ENCODE measurements at regions of chr20 and their contacts with region 1.

Region 1: DNA sequence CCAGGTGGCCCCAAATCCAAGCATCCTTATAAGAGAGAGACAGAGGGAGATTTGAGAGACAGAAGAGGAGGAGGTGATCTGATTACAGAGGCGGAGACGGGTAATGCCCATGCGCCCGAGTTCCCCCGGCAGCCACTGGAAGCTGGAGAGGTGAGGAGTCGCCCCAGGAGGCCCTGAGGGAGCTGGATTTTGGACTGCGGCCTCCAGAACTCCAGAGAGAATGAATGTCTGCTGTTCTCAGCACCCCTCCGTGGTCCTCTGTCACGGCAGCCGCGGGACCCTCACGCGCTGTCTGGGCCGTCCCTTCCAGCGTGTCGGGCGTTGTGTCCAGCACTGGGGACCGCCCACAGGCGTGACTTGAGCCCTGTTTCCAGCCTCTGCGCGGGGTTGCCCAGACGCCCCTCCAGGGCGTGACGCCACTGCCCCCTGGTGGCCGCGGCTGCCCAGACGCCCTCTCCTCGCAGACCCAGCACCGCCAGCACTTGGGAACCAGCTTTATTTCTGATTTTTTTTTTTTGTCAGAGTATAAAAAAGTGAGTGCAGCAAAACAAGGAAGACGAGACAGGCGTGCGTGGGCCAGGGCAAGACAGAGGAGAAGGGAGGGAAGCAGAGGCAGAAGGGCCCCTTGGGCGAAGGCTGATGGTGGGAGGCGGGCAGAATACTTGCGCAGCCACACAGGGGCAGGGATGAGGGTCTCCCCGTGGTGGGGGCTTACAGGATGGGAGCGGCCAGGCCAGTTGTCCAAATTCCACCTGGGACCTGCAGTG is 4.1 kb upstream of the ZNF512B start:
- DNase-seq: peak; percentile 57 to 87 (median 77)
- ATAC-seq: peak; percentile 51
- H3K4me3 ChIP-seq: no peak overlapping the region
- H3K4me3 Mint-ChIP-seq: no peak overlapping the region
- H3K27ac ChIP-seq: no peak overlapping the region
- H3K27ac Mint-ChIP-seq: peak overlapping the region; percentile 53
- H3K4me1 ChIP-seq: peaks cover 35% of the 10 kb centered on the region
- H3K4me1 Mint-ChIP-seq: peaks cover 42% of the 10 kb centered on the region
- H3K27me3 ChIP-seq: no peaks in the 10 kb centered on the region
- H3K27me3 Mint-ChIP-seq: no peaks in the 10 kb centered on the region
- CTCF ChIP-seq: peak; percentile 99

Region 2: GRCh38 chr20:63434599-63435378 is 539.0 kb before region 1 on chr20:
- CTCF ChIA-PET with region 1: no interaction called
- POLR2A ChIA-PET with region 1: no interaction called
- intact Hi-C with region 1: loop called in 1 of 2 experiments (anchors 2 kb)
- DNase-seq: peak; percentile 55 to 88 (median 76)
- ATAC-seq: peak; percentile 85
- H3K4me3 ChIP-seq: peak overlapping the region in 1 of 2 experiments; percentile 6
- H3K4me3 Mint-ChIP-seq: peak overlapping the region; percentile 44
- H3K27ac ChIP-seq: peak overlapping the region; percentile 11 to 21
- H3K27ac Mint-ChIP-seq: peak overlapping the region; percentile 79
- H3K4me1 ChIP-seq: peaks cover 8% of the 10 kb centered on the region
- H3K4me1 Mint-ChIP-seq: peaks cover 12% of the 10 kb centered on the region
- H3K27me3 ChIP-seq: no peaks in the 10 kb centered on the region
- H3K27me3 Mint-ChIP-seq: peaks cover 2% of the 10 kb centered on the region
- CTCF ChIP-seq: peak; percentile 92

Region 3: DNA sequence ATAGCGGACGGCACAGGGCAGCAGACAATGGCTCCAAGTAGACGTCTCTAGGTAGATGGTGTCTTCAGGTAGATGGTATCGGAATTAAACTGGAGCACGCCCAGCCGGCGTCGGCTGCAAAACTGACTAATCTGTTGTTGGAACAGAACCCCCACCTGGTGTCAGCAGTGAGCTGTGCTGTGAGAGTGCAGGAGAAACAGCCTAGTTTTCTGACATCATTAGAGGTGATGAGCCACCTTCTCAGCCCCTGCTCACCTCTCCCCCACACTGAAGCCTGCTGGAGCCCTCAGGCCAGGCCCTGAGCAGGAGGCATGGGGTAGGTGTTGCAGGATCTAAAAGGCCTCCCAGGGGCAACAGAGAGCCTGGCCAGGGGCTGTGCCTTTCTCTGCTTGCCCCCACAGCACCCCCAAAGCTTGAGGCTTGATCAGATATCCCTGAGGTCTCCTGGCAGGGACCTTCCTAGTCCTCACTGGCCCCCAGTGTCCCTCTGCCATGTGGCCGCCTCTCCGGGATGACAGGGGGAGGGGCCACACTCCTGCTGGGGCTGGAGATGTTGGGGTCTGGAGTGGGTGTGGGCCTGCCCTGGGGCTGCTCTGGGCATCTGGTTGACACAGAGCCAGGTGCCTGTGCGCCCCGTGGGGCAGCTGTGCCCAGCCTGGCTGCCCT is 392.9 kb before region 1 on chr20:
- CTCF ChIA-PET with region 1: no interaction called
- POLR2A ChIA-PET with region 1: no interaction called
- intact Hi-C with region 1: loop called in 1 of 2 experiments (anchors 2 kb)
- DNase-seq: peak; percentile 58 to 84 (median 77)
- ATAC-seq: peak; percentile 99
- H3K4me3 ChIP-seq: no peak overlapping the region
- H3K4me3 Mint-ChIP-seq: no peak overlapping the region
- H3K27ac ChIP-seq: no peak overlapping the region
- H3K27ac Mint-ChIP-seq: no peak overlapping the region
- H3K4me1 ChIP-seq: peaks cover 5% of the 10 kb centered on the region
- H3K4me1 Mint-ChIP-seq: peaks cover 3% of the 10 kb centered on the region
- H3K27me3 ChIP-seq: no peaks in the 10 kb centered on the region
- H3K27me3 Mint-ChIP-seq: no peaks in the 10 kb centered on the region
- CTCF ChIP-seq: peak; percentile 64

Region 4: DNA sequence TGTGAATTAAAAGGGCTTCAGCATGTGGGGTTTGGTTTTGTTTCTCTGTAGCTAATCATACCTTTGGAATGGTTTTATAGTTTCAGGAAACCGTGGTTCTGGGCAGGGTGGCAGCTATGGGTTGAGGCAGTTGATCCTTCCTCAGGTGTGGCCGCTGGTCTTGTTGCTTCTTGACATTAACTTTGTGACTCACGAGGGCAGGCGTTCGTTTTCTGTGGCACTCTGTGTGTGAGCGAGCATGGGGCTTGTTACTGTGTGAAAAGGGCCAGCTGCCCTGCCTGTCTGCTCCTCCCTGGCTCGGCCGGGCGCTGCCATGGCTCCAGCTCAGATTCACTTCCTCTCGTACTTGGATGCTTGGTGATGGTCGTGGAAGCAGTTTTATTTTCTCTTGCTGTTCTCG is 62.6 kb before region 1 on chr20:
- CTCF ChIA-PET with region 1: interaction called, 17 read pairs
- POLR2A ChIA-PET with region 1: interaction called, 3 read pairs
- intact Hi-C with region 1: loop called (anchors 1 kb)
- DNase-seq: no peak
- ATAC-seq: no peak
- H3K4me3 ChIP-seq: no peak overlapping the region
- H3K4me3 Mint-ChIP-seq: no peak overlapping the region
- H3K27ac ChIP-seq: no peak overlapping the region
- H3K27ac Mint-ChIP-seq: peak overlapping the region; percentile 46
- H3K4me1 ChIP-seq: peaks cover 13% of the 10 kb centered on the region
- H3K4me1 Mint-ChIP-seq: peaks cover 45% of the 10 kb centered on the region
- H3K27me3 ChIP-seq: no peaks in the 10 kb centered on the region
- H3K27me3 Mint-ChIP-seq: no peaks in the 10 kb centered on the region
- CTCF ChIP-seq: no peak

Region 5: DNA sequence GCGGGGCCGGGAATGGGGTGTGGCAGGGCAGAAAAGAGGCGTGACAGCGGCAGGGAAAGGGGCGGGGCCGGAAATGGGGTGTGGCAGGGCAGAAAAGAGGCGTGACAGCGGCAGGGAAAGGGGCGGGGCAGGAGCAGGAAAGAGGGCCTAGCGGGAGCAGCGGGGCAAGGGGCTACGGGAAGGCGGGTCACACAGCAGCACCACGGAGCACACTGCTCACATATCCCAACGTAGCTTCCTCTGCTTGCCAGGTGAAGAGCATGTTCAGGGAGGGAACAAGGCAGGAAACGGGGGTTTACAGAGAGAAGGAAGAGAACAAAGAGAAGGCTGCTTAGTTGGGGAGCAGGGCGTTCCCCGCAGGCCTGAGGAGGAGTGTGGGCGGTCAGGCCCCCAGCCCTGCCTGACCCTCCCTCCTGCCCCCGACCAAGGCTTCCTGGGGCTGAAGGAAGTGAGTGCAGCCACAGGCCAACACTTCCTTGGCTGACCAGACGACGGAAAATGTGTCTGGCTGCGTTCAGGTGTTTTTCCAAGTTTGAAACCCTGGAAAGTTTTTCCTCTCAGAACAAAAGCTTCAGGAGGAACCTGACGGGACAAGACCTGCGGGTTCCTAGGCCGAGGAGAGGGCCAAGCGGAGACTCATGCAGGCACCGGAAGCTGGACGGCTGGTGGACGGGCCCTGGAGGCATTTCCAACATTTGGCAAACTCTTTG is 31.4 kb before region 1 on chr20:
- CTCF ChIA-PET with region 1: no interaction called
- POLR2A ChIA-PET with region 1: no interaction called
- intact Hi-C with region 1: no loop called
- DNase-seq: peak in 3 of 9 experiments; percentile 45 to 59 (median 56)
- ATAC-seq: no peak
- H3K4me3 ChIP-seq: no peak overlapping the region
- H3K4me3 Mint-ChIP-seq: peak overlapping the region; percentile 57
- H3K27ac ChIP-seq: peak overlapping the region; percentile 27 to 58
- H3K27ac Mint-ChIP-seq: peak overlapping the region; percentile 45
- H3K4me1 ChIP-seq: peaks cover 23% of the 10 kb centered on the region
- H3K4me1 Mint-ChIP-seq: peaks cover 23% of the 10 kb centered on the region
- H3K27me3 ChIP-seq: no peaks in the 10 kb centered on the region
- H3K27me3 Mint-ChIP-seq: no peaks in the 10 kb centered on the region
- CTCF ChIP-seq: no peak

Region 6: DNA sequence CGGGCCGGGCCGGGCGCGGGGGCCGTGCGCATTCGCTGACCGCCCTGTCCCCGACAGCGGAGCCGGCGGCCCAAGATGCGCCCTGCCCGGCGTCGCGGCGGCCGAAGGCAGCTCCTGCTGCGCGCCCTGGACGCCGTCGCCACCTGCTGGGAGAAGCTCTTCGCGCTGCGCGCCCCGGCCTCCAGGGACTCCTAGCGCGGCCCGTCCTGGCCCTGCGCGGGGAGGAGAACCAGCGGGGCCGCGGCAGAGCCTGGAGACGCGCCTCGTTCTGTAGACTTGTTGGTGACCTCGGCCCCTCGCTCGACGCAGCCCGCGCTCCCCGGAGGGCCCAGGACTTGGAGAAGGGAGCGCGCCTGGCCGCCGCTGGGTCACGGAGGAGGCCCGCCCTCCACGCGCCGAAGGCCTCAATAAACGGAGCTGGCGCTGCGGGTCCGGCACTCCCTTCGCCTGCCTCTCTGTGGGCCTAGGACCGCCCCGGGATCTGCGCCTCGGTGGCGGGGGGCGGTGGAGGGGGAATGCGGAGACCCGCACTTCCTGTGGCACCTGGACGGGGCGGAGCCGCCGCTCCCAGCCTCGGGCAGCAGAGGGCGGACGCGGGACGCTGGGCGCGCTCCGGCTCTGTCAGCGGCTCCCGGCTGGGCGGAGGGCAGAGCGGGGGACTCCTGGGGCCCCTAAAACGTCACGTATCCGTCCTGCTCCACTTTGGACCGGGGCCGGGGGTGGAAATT is 64.9 kb after region 1 on chr20:
- CTCF ChIA-PET with region 1: interaction called, 26 read pairs
- POLR2A ChIA-PET with region 1: no interaction called
- intact Hi-C with region 1: no loop called
- DNase-seq: peak; percentile 57 to 91 (median 78)
- ATAC-seq: peak; percentile 78
- H3K4me3 ChIP-seq: peak overlapping the region; percentile 45 to 76
- H3K4me3 Mint-ChIP-seq: peak overlapping the region; percentile 78
- H3K27ac ChIP-seq: peak overlapping the region in 1 of 2 experiments; percentile 45
- H3K27ac Mint-ChIP-seq: no peak overlapping the region
- H3K4me1 ChIP-seq: peaks cover 75% of the 10 kb centered on the region
- H3K4me1 Mint-ChIP-seq: peaks cover 39% of the 10 kb centered on the region
- H3K27me3 ChIP-seq: peaks cover 0 to 3% of the 10 kb centered on the region in 2 experiments
- H3K27me3 Mint-ChIP-seq: no peaks in the 10 kb centered on the region
- CTCF ChIP-seq: peak; percentile 67

Region 7: DNA sequence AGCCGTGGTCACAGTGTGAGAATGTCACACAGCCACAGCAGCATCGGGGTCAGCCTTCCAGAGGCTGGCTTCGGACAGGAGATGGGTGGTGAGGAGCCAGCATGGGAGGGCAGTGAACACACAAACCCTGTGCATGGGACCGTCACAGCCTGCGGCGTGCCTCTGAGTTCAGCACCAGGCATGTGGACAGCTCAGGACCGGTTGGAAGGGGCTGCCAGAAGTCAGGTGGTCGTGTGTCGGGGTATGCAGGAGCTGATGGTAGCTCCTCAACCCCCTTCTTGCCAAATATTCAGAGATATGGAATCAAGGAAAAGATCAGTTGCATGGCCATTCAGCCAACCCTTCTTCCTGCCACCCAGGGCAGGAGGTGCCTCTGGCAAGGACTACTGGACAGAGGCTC is 218.6 kb after region 1 on chr20:
- CTCF ChIA-PET with region 1: no interaction called
- POLR2A ChIA-PET with region 1: no interaction called
- intact Hi-C with region 1: no loop called
- DNase-seq: no peak
- ATAC-seq: no peak
- H3K4me3 ChIP-seq: no peak overlapping the region
- H3K4me3 Mint-ChIP-seq: no peak overlapping the region
- H3K27ac ChIP-seq: no peak overlapping the region
- H3K27ac Mint-ChIP-seq: no peak overlapping the region
- H3K4me1 ChIP-seq: no peaks in the 10 kb centered on the region
- H3K4me1 Mint-ChIP-seq: peaks cover 4% of the 10 kb centered on the region
- H3K27me3 ChIP-seq: no peaks in the 10 kb centered on the region
- H3K27me3 Mint-ChIP-seq: peaks cover 23% of the 10 kb centered on the region
- CTCF ChIP-seq: no peak